K562 (cell line): ENCODE measurements at regions of chr5 and their contacts with region 1.

Region 1: DNA sequence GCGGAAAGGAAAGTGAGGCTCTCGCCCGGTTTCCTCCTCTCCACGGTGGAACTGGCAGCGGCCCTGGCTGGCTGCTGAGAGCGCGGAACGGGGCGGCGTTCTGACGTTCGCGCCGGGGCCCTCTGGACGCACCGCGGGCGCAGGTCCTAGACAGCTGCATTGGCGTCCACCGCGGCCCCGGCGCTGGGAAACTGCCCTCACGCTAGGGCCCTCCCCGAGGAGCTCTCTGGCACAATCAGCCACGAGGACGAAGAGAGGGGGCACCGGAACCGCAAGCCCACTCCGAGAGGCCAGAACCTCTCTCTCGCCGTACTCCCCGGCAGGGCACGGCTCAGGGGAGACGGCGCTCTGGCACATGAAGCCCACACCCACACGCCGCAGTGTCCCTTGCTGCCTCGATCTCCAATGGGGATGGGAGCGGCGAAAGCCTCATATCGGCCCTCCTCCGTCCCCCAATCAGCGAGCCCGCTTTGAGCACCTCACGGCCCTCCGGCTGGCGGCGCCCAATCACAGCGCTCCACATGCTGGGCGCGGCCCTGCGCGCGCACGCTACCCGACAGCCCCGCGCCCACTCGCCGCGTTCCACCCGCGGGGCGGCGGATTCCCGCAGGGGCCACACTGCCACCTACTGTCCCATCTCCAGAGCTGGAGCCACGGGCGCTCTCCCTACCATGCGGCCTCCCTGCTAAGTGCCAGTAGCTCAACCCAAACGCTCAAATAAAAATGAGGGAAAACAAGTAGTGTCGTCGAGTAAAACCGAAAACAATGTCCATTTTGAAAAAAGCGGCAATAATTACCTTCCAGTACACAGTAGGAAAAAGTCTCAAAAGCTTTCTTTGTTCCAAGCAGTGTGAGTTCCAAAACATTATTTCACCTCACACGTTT is 11.8 kb downstream of the MRPS27 start:
- DNase-seq: peak; percentile 98 to 99 (median 98)
- ATAC-seq: peak; percentile 97
- H3K4me3 ChIP-seq: peak overlapping the region; percentile 68
- H3K27ac ChIP-seq: peak overlapping the region; percentile 96
- H3K4me1 ChIP-seq: peaks cover 25 to 30% of the 10 kb centered on the region in 2 experiments
- H3K27me3 ChIP-seq: no peaks in the 10 kb centered on the region
- CTCF ChIP-seq: peak; percentile 89 to 92 (median 90)
- EP300 ChIP-seq: no peak; the same call in 1 of the 2 replicates
- POLR2A ChIP-seq: peak; percentile 98
- RAD21 ChIP-seq: peak; percentile 77 to 90

Region 2: DNA sequence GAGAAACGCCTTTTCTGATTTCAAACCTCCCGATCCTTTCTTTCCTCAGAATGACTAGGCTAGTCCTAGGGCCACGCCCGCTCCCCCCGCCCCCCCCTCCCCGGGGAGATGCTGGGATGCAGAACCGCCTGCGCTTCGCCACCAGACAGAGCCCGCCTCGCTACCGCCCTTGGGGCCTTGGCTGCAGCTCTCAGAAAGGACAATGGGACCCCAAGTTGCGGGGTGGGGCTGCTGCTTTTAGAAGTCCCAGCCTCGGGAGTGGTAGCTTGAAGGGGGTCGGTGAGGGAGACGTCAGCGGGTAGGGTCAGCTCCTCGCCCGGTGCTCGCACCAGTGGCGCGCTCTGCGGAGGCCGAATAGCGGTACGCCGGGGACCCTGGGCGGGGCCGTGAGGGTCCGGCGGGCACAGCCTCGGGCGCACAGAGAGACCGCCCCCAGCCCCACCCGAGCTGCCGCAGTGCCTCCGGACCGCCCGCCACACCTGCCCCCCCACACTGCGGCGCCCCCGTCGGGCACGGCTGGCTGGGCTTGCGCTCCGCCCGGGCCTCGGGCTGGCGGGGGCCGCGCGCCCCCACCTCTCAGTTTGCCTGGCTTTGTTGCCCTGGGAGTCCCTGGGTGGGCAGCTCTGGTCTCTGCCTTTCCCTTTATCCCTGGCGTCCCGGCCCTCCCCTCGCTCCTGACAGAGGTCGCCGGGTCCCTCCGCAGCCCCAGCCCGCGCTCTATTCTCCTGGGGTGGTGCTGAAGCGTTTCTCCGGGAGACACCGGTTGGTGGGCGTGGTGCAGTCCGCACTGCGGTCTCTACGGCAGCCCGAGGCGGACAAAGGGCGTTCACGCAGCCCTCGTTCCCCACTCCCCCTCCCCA is 199.8 kb before region 1 on chr5:
- CTCF ChIA-PET with region 1: no interaction called
- POLR2A ChIA-PET with region 1: interaction called, 5 read pairs
- in situ Hi-C with region 1: no loop called
- intact Hi-C with region 1: loop called (anchors 2 kb)
- DNase-seq: peak; percentile 78 to 88 (median 84)
- ATAC-seq: peak; percentile 79
- H3K4me3 ChIP-seq: peak overlapping the region; percentile 66
- H3K27ac ChIP-seq: peak overlapping the region; percentile 86
- H3K4me1 ChIP-seq: peaks cover 18 to 30% of the 10 kb centered on the region in 2 experiments
- H3K27me3 ChIP-seq: no peaks in the 10 kb centered on the region
- CTCF ChIP-seq: no peak
- EP300 ChIP-seq: no peak
- POLR2A ChIP-seq: peak; percentile 49; the same call in 1 of the 2 replicates
- RAD21 ChIP-seq: no peak

Region 3: DNA sequence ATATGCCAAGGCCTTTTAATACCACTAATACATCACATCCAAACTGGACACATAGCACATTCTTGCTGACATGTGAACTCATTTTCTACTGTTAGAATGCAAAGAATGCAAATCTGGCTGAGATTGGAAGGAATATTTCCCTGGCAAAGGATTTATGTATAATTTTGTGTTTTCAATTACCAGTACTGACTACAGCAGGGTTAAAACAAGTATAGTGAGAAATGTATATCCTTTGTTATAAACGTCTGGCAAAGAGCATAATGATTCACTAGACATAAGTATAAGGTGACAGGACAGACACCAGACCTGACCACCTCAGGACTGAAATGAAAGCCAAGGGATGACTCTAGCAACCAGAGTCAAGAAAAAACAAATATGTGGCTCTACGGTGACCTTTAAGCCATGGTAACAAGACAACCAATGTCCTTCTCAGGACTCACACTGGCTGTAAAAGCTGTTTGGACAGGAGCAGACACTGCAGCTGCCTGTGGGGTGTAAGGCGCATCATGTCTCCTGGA is 83.2 kb before region 1 on chr5:
- CTCF ChIA-PET with region 1: no interaction called
- POLR2A ChIA-PET with region 1: no interaction called
- in situ Hi-C with region 1: no loop called
- intact Hi-C with region 1: loop called (anchors 5 kb)
- DNase-seq: no peak
- ATAC-seq: no peak
- H3K4me3 ChIP-seq: no peak overlapping the region
- H3K27ac ChIP-seq: no peak overlapping the region
- H3K4me1 ChIP-seq: peaks cover 0 to 32% of the 10 kb centered on the region in 2 experiments; a peak in 3 of 5 replicates
- H3K27me3 ChIP-seq: no peaks in the 10 kb centered on the region
- CTCF ChIP-seq: no peak
- EP300 ChIP-seq: no peak
- POLR2A ChIP-seq: no peak
- RAD21 ChIP-seq: no peak

Region 4: GRCh38 chr5:72268753-72269410 is 39.3 kb before region 1 on chr5:
- CTCF ChIA-PET with region 1: no interaction called
- POLR2A ChIA-PET with region 1: no interaction called
- in situ Hi-C with region 1: no loop called
- intact Hi-C with region 1: loop called (anchors 5 kb)
- DNase-seq: peak; percentile 30 to 71 (median 44)
- ATAC-seq: peak; percentile 79
- H3K4me3 ChIP-seq: no peak overlapping the region
- H3K27ac ChIP-seq: no peak overlapping the region
- H3K4me1 ChIP-seq: peaks cover 0 to 2% of the 10 kb centered on the region in 2 experiments; a peak in 2 of 5 replicates
- H3K27me3 ChIP-seq: no peaks in the 10 kb centered on the region
- CTCF ChIP-seq: peak; percentile 60 to 78 (median 67)
- EP300 ChIP-seq: no peak
- POLR2A ChIP-seq: no peak
- RAD21 ChIP-seq: peak; percentile 53 to 55

Region 5: DNA sequence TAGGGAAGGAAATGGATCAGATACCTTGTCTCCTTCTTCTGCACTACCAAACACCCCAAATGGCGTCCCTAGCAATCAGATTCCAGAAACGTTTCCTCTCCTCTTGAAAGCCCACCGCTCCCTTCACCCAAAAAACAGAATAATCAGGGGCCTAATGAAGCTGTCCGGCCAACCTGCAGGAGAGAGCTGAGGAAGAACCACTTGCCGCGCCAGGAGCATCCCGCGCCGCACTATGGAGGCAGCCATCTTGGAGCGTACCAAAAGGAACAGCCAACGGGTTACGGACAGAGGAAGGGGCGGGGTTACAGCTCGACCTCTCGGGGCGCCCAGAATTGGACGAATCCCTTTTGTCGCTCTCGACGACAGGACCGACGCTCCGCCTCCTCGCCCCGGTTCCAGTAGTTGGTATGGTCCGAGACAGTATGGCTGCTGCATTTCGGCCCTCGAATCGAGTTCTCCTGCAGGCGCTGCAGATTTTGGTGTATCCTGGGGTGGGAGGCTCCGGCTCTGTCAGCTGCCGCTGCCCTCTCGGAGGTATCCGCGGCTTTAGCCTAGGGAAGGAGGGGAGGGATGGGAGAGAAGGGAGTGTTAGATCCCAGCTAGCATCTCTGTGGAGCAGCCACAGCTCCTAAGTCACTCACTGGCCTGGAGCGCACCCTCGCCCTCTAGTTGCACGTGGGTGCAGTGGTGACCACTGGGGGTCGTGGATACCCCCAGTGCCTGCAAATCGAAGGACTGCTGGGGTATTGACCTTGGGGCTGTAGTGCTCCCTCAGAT is 12.0 kb after region 1 on chr5 and contains the starts of genes MRPS27 and PTCD2:
- CTCF ChIA-PET with region 1: no interaction called
- POLR2A ChIA-PET with region 1: interaction called, 35 read pairs
- in situ Hi-C with region 1: no loop called
- intact Hi-C with region 1: no loop called
- DNase-seq: peak; percentile 94 to 99 (median 96)
- ATAC-seq: peak; percentile 98
- H3K4me3 ChIP-seq: peak within 1 kb of the TSS; percentile 89
- H3K27ac ChIP-seq: peak within 1 kb of the TSS; percentile 94
- H3K4me1 ChIP-seq: peaks cover 0 to 11% of the 10 kb centered on the region in 2 experiments; a peak in 4 of 5 replicates
- H3K27me3 ChIP-seq: no peaks in the 10 kb centered on the region
- CTCF ChIP-seq: peak; percentile 27 to 47 (median 44); a peak in 3 of 6 replicates
- EP300 ChIP-seq: no peak
- POLR2A ChIP-seq: peak; percentile 97
- RAD21 ChIP-seq: 0 out of 4 replicates have a peak, but pooled peaks of 1 of the 2 experiments have one; percentile 4
- polyA plus RNA-seq, gene MRPS27: 106 to 122 TPM
- polyA plus RNA-seq, gene PTCD2: 18.6 to 19.6 TPM

Region 6: GRCh38 chr5:72552041-72552557 is 243.9 kb after region 1 on chr5:
- CTCF ChIA-PET with region 1: no interaction called
- POLR2A ChIA-PET with region 1: no interaction called
- in situ Hi-C with region 1: no loop called
- intact Hi-C with region 1: no loop called
- DNase-seq: peak in 1 of 4 experiments; percentile 20
- ATAC-seq: peak; percentile 43; the same call in 1 of the 3 replicates
- H3K4me3 ChIP-seq: no peak overlapping the region
- H3K27ac ChIP-seq: no peak overlapping the region
- H3K4me1 ChIP-seq: peaks cover 10 to 12% of the 10 kb centered on the region in 2 experiments; a peak in 3 of 5 replicates
- H3K27me3 ChIP-seq: no peaks in the 10 kb centered on the region
- CTCF ChIP-seq: no peak
- EP300 ChIP-seq: no peak
- POLR2A ChIP-seq: no peak
- RAD21 ChIP-seq: no peak